PC-9 (cell line): ENCODE measurements at regions of chr6 and their contacts with region 1.

Region 1: DNA sequence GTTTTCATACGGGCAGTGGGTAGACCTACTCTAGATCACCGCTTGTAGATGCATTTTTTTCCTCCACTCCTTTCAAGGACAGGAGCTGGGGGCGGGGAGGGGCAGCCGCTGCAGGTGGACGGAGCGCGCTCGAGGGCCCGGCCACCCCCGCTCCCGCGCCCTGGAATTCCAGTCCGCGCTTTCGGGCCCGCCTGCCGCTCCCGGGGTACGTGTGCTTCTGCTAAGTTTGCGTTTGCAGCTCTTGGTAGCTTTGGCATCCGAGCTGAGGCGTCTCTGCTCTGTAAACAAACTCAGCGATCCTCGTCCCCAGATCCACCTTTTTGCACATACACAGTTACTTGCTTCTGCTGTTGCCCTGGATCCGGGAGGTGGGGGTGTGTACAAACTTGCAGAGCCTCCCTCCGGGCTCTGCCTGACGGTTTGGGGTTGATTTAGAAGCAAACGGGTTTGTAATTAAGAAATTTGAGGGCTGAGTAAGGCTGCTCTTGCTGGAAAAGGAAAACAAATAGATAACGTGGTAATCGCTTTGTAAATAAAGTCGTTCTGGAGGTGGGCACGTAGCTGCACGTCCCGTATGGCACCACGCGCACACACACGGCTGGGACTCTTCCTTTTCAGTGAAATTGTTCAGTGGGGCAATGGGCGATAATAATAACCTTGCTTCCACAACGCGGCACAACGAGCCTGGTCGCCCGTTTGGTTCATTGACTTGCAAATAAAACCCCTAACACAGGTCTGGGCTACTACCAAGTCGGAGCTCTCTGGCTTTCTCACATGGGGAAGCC is 976 bp upstream of the CITED2 start:
- DNase-seq: peak; percentile 85 to 100
- H3K4me3 ChIP-seq: peak overlapping the region; percentile 89
- H3K27ac ChIP-seq: peak overlapping the region; percentile 94
- H3K4me1 ChIP-seq: peaks cover 58% of the 10 kb centered on the region
- H3K27me3 ChIP-seq: no peaks in the 10 kb centered on the region
- CTCF ChIP-seq: no peak; the same call in 1 of the 2 replicates

Region 2: GRCh38 chr6:139204978-139205377 is 170.4 kb before region 1 on chr6:
- CTCF ChIA-PET with region 1: no interaction called
- POLR2A ChIA-PET with region 1: no interaction called
- intact Hi-C with region 1: no loop called
- DNase-seq: no peak
- H3K4me3 ChIP-seq: no peak overlapping the region
- H3K27ac ChIP-seq: no peak overlapping the region
- H3K4me1 ChIP-seq: no peaks in the 10 kb centered on the region
- H3K27me3 ChIP-seq: no peaks in the 10 kb centered on the region
- CTCF ChIP-seq: no peak

Region 3: DNA sequence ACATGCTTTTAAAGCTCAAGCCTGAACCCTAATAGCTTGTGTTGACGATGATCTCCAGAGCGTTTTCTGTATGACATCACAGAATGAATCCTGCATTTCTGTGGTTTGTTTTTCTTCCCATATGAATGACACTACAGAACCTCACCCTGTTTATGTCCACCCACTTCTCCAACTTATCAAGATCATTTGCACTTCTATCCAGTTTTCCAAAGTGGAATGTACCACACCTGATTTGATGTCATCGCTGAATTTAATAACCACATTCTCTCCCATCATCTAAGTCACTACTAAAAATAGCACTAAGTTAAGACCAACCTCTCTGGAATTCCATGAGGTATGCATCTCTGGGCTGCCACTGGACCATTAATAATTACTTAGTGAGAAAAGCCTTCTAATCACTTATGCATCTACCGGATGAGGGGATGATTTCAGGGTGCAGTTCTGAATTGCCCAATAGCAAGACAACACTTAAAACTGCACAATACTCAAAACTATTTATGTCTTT is 32.3 kb after region 1 on chr6:
- CTCF ChIA-PET with region 1: no interaction called
- POLR2A ChIA-PET with region 1: interaction called, 35 read pairs
- intact Hi-C with region 1: loop called (anchors 1 kb)
- DNase-seq: peak; percentile 51 to 100
- H3K4me3 ChIP-seq: peak overlapping the region; percentile 15; the same call in 1 of the 2 replicates
- H3K27ac ChIP-seq: peak overlapping the region; percentile 94
- H3K4me1 ChIP-seq: peaks cover 41% of the 10 kb centered on the region
- H3K27me3 ChIP-seq: no peaks in the 10 kb centered on the region
- CTCF ChIP-seq: no peak

Region 4: GRCh38 chr6:139533573-139534471 is 158.4 kb after region 1 on chr6:
- CTCF ChIA-PET with region 1: no interaction called
- POLR2A ChIA-PET with region 1: interaction called, 10 read pairs
- intact Hi-C with region 1: loop called (anchors 5 kb)
- DNase-seq: no peak
- H3K4me3 ChIP-seq: no peak overlapping the region
- H3K27ac ChIP-seq: no peak overlapping the region
- H3K4me1 ChIP-seq: 0 out of 2 replicates have a peak, but pooled peaks cover 4% of the 10 kb centered on the region
- H3K27me3 ChIP-seq: no peaks in the 10 kb centered on the region
- CTCF ChIP-seq: no peak

Region 5: DNA sequence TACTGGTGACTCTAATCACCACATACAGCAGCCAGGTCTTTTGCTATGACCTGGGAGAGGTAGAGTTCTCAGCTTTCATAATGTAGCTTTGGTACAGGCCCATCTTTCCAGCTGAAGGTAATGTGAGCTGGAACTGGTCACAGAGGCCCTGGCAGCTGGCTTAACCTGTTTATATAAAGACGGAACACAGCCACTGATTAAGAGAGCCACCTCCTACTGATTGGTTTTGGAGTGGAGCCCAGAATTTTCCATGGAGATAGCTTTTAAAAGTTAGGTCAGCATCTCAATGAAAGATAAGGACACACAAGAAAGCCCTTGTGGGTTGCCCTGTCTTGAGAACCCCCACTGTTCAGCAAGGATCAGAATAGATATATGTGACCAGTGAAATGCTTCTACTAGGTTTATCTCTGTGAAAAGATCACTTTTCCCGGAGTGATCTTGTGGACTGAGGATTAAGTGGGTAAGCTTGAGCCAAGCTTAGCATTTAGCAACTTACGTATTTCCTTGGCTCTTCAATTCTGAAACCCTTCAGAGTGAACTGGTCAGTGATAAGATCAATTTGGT is 212.7 kb after region 1 on chr6:
- CTCF ChIA-PET with region 1: interaction called, 3 read pairs
- POLR2A ChIA-PET with region 1: interaction called, 13 read pairs
- intact Hi-C with region 1: loop called (anchors 1 kb)
- DNase-seq: peak; percentile 63 to 99
- H3K4me3 ChIP-seq: peak overlapping the region; percentile 9; the same call in 1 of the 2 replicates
- H3K27ac ChIP-seq: peak overlapping the region; percentile 87
- H3K4me1 ChIP-seq: peaks cover 67% of the 10 kb centered on the region
- H3K27me3 ChIP-seq: no peaks in the 10 kb centered on the region
- CTCF ChIP-seq: no peak

Region 6: DNA sequence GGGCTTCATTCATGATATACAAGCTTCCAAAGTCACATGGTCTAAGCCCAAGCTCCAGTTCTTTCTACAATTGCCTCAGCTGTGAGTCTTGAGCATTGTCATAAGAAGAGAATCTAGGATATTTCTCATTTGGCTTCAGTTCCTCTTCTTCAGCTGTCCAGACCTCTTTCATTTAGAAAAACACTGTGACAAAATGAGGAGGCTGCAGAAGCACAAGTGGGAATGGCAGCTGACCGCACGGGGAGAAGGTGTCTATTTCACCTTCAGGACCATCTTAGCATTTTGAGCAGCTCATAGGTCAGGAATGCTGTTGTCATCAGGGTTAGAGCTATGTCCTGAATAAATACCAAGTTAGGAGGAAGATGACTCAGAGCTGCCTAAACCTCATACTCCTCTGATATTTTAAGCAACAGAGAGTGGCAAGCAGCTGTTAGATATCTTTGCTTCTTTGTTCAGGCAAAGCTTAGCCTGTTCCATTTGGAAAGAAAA is 389.1 kb after region 1 on chr6:
- CTCF ChIA-PET with region 1: no interaction called
- POLR2A ChIA-PET with region 1: interaction called, 9 read pairs
- intact Hi-C with region 1: loop called (anchors 1 kb)
- DNase-seq: peak; percentile 52 to 99
- H3K4me3 ChIP-seq: no peak overlapping the region
- H3K27ac ChIP-seq: peak overlapping the region; percentile 80
- H3K4me1 ChIP-seq: peaks cover 62% of the 10 kb centered on the region
- H3K27me3 ChIP-seq: no peaks in the 10 kb centered on the region
- CTCF ChIP-seq: no peak

Region 7: GRCh38 chr6:140462453-140463311 is 1087.3 kb after region 1 on chr6:
- CTCF ChIA-PET with region 1: no interaction called
- POLR2A ChIA-PET with region 1: interaction called, 4 read pairs
- intact Hi-C with region 1: loop called (anchors 10 kb)
- DNase-seq: peak; percentile 40 to 99
- H3K4me3 ChIP-seq: peak overlapping the region; percentile 35; the same call in 1 of the 2 replicates
- H3K27ac ChIP-seq: peak overlapping the region; percentile 91
- H3K4me1 ChIP-seq: peaks cover 39% of the 10 kb centered on the region
- H3K27me3 ChIP-seq: no peaks in the 10 kb centered on the region
- CTCF ChIP-seq: no peak